ENCODE measurements at regions of chr13 and their contacts with region 1.

Region 1: DNA sequence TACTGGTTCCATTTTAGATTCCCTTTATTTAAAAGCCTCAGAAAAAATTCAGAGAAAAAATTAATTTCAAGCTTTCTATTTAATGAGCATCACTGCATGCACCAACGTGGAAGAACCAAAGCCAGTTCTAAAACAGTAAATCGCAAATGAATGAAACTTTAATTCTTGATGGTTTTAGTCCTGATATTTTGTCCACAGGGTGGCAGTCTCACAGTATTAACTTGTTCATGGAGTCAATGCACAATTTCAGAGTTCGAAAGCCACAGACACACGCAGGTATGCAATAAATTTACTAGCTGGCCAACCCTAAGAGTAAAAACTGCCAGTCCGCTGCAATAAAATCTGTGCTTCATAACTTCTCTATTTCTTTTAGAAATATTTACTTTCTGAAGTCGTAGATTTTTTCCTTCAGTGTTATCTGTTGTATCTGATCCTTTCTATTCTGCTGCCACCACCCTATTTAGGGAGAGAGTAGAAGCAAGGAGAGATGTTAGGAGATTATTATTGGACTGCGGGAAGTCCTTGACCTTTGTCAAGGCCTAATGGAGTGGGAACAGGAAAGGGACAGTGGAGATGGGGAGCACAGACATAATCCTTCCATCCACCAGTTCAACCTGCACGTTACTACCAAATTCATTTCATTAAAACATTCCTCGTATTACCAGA is 7.0 kb upstream of the WBP4 start:
- DNase-seq: peak in 7 of 42 donors; percentile 11 to 59 (median 34)

Region 2: DNA sequence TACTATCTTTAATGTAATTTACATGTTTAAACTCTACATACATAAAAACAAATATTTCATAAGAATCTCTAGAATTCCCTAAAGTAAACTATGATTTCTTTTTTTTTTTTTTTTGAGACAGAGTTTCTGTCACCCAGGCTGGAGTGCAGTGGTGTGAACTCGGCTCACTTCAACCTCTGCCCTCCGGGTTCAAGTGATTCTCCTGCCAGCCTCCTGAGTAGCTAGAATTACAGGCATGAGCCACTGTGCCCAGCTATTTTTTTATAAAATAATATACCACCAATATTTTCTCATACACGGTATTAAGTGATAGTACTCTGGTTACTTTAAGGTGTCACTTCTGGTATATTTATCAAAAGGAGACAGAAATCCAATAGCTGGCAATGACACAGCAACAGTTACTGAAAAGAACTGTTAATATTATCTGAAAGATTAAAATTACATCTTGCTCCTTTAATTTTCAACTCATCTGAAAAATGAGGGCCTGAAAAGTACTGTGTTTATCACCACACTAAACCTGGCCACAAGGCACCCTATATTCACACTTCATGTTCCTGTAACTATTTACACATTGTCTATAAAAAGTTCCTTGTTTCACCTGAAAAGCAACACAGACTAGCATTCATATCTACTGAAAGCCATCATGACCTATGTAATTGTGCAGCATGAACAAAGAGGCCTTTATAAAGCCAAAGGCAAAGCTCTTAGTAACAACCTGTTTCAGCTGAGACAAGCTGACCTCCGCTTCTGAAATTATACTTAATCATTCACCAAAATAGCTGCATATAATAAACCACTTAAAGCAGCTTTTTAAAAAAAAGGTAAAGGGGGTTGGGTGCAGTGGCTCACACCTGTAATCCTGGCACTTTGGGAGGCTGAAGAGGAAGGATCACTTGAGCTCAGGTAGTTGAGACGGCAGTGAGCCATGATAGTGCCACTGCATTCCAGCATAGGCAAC is 158.8 kb before region 1 on chr13:
- intact Hi-C with region 1: no loop called
- DNase-seq: no peak

Region 3: DNA sequence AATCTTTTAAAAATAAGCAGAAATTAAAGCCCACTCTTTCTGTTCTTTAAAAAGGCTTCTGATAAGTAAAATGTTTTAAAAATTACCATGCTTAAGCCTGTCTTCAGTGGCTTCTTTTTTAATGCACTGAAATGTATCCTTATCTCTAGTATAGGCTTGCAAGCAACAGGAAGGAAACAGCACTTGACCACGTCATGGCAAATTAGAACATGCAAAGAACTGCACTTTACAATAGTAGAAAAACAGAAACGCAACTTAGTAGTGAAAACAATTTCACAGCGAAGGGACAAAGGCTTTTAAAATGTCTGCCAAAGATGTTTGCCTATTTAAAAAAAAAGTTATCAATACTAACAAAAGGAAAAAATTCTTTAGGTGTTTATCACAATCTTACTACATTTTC is 71.6 kb before region 1 on chr13:
- intact Hi-C with region 1: loop called (anchors 10 kb)
- DNase-seq: peak in 8 of 42 donors; percentile 20 to 61 (median 28)

Region 4: GRCh38 chr13:41299316-41300094 is 245.2 kb after region 1 on chr13:
- intact Hi-C with region 1: no loop called
- DNase-seq: no peak

Measured in head of caudate nucleus (tissue), 42 donors.